ENCODE measurements at regions of chr10 and their contacts with region 1.

Region 1: DNA sequence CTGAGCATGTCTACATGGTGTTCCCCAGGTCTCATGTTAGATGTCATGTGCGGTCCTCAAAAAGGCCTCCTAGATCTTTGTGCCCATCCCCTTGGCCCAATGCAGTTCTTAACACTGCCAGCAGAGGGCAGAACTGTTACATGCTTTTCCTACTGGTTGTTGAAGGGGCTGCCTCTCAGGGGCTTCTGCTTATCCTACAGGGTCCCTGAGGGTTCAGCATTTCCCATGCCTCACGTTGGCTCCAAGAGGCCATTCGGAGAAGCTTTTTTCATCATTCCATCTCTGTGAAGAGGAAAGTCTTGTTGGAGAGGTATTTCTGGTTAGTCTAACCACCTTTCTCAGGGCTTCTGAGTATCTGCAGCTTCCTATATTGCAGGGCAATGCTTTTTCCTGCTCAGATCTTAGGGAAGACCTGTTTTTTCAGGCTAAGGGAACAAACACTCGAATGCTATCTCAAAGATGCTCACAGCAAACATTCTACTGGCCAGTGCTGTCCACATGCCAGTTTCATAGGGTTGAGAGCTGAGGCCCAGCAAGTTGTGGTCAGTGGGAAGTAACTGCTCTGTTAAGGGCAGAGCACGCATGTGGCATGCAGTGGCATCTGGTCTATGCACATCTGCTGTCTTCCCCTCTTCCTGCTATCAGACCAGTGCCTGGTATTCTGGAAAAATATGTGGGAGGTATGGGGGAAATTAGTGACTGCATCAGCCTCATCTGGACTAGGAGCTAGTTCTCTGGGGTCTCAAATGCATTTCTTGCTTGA is 31.5 kb downstream of the MBL2 start:
- DNase-seq: peak; percentile 44
- ATAC-seq: peak in 1 of 2 donors; percentile 14

Region 2: DNA sequence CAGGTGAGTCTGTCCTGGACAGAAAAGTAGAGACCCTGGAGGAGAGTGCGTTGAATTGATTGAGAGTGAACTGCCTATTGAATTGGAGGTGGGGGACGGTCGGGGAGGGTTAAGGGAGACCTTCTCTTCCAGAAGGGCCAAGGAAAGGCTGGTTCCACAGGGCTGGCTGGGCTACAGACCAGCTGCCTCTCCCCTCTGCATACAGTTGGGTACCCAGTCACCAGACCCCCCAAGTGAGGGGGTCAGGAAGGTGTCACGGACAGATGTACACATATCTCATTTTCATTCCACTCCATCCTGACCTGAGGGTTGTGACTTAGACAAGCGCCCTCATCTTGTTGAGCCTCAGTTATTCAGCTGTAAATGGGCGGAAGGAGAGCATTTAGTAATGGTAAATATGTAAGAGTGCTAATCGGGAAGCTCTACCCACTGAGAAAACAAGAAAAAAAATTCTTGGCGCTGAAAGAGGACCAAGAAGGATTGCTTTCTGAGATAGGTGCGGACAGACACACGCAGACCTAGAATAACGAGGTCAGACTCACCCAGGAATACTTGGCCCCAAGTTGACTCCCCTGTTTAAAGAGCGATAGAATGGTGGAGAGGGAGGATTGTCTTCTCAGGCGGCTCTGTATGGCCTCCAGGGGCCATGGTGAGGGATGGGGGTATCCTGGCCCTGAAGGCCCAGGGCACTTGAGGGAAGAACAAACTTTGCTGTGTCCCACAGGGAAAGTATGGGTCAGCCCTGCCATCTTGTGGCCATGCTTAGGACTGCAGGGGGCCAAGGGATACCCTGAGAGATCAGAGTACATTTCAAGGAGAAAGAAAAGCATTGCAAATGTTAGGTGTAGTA is 38.7 kb after region 1 on chr10:
- intact Hi-C with region 1: loop called in 1 of 2 experiments (anchors 2 kb)
- DNase-seq: peak; percentile 62
- ATAC-seq: peak; percentile 65 to 87

Region 3: DNA sequence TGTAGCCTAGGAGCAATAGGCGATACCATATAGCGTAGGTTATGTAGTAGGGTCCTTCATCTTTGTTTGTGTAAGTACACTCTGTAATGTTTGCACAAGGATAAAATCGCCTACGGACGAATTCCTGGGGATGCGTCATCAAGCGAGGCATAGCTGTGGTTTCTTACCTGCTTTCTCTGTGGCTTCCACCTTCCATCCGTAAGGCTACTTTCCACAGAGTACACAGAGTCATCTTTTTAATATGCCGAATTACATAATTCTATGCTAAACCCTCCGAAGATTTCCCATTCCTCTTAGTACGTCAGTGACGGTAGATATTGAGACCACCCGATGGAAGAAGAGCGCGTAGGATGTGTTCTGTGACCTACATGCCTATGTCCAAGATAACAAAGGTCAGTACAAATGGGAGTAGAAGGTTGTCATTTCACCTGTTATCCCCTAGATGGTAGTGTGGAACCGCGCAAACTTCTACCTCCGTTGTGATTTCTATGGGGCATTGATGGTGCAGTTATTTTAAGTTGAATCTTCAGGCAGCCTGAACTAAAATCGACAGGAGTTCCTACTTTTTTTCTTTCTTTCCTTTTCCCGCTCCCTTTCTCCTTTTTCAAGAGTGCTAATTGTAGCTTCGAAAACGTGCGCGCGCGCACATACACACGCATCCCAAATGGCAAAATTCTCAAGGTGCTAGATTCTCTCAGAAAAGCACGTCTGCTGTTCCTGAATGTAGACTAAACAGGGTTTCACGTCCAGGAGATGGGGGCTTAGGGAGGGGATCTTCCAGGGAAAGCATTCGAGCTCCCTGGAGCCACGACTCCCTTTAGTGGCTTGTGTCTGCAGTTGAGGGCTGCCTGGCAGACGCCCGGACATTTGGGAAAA is 143.1 kb after region 1 on chr10:
- intact Hi-C with region 1: no loop called
- DNase-seq: no peak
- ATAC-seq: peak; percentile 77 to 85

Region 4: GRCh38 chr10:52940921-52941320 is 199.8 kb after region 1 on chr10:
- intact Hi-C with region 1: no loop called
- DNase-seq: no peak
- ATAC-seq: no peak

Measured in left cardiac atrium (tissue), 4 donors.